Aorta (tissue), 5 donors: ENCODE measurements at regions of chr1 and their contacts with region 1.

Region 1: GRCh38 chr1:45512641-45513054 is 9.0 kb downstream of the PRDX1 start:
- DNase-seq: peak in 1 of 2 donors; percentile 64
- ATAC-seq: peak; percentile 58
- H3K4me3 ChIP-seq: no peak overlapping the region
- H3K27ac ChIP-seq: no peak overlapping the region
- H3K4me1 ChIP-seq: no peaks in the 10 kb centered on the region
- H3K27me3 ChIP-seq: no peaks in the 10 kb centered on the region

Region 2: DNA sequence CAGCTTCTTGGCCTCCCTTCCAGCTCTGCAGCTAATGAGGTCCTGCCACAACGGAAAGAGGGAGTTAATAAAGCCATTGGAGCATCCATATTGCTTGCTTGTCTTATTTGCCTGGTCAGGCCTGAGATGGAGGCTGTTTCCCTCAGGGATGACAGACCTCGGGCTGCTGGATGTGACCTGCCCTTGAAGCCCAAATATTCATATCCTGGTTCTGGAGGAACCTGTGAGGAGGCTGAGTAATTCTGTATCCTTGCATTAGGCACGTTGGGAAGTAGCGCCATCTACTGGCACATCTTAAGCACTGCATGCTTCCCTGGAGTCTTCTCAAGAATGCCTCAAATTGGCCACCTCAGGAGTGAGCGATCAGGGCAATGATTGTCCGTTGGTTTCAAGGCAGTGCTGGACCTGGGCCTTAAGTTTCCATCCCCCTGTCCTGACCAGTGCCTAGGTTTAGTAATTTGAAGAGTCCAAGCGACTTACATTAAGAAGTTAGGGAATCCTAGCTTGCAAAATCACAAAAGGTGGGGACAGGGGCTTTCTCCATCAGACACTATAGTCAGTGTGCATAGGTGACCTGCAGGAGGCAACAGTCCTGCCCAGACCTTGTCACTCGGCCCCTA is 57.4 kb after region 1 on chr1:
- intact Hi-C with region 1: loop called (anchors 2 kb)
- DNase-seq: peak; percentile 72 to 81
- ATAC-seq: peak; percentile 90
- H3K4me3 ChIP-seq: no peak overlapping the region
- H3K27ac ChIP-seq: peak overlapping the region in 1 of 2 donors; percentile 33
- H3K4me1 ChIP-seq: no peaks in the 10 kb centered on the region
- H3K27me3 ChIP-seq: no peaks in the 10 kb centered on the region